Gastrocnemius medialis (tissue), 4 donors: ENCODE measurements at regions of chr1 and their contacts with region 1.

Region 1: DNA sequence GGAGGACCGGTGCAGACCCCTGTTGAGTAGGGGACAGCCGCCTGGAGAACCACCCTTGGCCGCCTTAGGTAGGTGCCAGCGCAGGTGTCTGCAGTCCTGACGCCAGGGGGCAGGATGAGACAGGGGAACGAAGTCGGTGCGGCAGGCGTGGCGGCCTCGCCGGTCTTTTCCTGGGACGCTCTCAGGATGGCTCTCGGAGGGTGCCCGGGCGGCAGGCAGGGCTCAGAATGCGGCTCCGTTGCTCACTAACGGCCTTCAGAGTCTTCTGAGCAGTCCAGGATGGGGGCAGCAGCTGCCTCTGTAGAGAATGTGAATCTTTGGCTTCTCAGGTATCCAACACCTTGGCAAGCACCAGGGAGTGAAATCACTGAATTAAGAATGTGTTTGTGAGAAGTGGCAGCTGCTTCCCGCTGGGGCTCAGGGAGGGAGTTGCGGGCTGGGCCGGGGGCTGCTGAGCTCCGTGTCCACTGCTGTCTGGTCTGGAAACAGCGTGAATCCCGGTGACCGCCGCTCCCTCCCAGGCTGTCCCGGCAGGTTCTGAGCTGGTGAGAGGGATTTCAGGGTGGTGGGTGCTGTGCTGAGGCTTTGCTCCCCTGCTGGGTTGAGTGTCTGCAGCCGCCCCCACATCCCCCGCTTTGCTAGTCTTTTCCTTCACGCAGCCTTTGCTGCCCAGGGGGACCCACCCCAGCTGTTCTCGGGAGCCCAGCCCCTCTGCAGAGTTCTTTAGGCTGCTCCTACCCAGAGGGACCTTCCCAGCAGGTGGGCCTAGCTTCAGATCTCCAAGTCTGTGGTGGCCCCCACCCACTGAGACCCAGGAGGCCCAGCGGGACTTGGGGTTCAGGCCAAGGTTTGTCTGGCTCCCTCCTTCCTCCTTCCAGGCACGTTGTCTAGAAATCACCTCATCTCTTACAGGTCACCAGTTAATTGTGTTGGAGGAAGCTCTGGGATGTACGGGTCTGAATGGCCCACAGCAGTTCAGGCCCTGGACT is 11.1 kb upstream of the C1orf174 start:
- DNase-seq: peak in 1 of 2 donors; percentile 34
- ATAC-seq: peak in 1 of 2 donors; percentile 55
- H3K4me3 ChIP-seq: no peak overlapping the region
- H3K27ac ChIP-seq: no peak overlapping the region
- H3K4me1 ChIP-seq: no peaks in the 10 kb centered on the region
- H3K27me3 ChIP-seq: peaks cover 0 to 16% (median 0%) of the 10 kb centered on the region in 3 donors
- CTCF ChIP-seq: peak; percentile 12 to 64 (median 60)
- POLR2A ChIP-seq: no peak

Region 2: DNA sequence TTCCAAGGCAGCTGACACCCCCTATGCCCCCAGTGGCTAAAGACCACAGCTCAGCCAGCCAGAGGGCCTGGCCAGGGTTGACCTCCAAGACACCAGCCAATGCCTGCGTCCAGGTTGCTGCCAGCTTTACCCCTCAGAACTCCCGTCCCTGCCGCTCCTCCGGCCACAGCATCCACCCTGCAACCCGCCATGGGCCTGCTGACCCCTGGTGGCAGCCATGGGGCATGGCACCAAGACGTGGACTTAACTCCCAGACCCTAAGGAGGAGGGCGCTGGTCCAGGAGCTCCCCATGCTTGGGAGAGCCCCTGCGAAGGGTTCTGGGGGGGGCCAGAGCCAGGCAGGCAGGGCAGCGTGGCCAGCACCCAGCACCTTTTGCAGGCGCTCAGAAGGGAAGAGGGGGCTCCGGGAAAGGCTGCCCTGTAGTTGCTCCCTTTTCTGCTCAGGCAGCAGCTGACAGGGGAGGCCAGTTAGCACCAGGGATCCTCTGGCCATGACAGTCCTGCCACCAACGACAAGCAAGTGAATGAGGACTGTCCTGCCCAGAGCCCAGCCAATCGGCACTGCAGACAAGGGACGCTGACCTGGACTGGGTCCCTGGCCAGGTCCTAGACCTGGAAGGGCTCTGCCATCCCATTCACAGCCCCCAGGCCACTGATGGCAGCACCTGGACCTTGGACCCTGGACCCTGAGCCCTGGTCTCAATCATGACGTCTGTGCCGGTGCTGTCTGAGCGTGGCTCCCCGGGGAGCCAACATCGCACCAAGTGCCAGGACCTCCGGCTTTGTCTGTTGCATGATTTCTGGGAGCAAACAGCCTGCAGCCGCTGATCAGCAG is 1834.8 kb after region 1 on chr1:
- in situ Hi-C with region 1: no loop called
- intact Hi-C with region 1: loop called (anchors 5 kb)
- DNase-seq: peak in 1 of 2 donors; percentile 17
- ATAC-seq: no peak
- H3K4me3 ChIP-seq: no peak overlapping the region
- H3K27ac ChIP-seq: no peak overlapping the region
- H3K4me1 ChIP-seq: no peaks in the 10 kb centered on the region
- H3K27me3 ChIP-seq: peaks cover 3 to 12% (median 9%) of the 10 kb centered on the region in 3 donors
- CTCF ChIP-seq: peak; percentile 36 to 73 (median 65)
- POLR2A ChIP-seq: no peak